ENCODE measurements at regions of chr19 and their contacts with region 1.

Region 1: DNA sequence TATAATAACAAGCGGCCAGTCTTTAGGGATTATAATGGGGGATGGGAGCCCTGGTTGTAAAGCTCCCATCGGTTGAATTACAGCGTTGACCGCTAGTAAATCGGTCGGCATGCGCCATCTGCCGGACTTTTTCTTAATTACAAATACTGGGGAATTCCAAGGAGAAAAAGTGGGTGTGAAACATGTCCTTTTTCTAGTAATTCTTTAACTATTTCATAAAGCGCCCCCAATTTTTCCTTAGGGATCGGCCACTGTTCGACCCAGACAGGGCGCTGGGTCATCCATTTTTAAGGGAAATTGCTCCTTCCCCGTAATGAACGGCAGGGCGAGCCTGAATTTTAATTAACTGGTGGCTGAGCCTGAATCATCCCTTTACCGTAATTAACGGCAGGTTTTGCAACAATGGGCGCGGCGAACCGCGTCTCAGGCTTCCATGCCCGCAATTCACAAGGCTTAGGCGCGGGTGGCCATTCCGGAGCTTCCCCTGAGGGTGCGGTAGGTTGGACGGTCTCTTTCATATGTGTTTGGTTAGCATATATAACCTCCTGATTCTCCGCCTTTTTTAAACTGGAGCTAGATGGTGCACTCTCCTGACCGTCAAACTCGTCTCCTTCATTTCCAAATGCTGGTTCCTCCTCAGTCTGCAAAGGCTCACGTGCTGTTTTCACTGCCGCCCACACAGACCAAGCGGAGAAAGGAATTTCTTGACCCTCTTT is 30.2 kb upstream of the EVI5L start:
- DNase-seq: no peak
- H3K4me3 ChIP-seq: peak overlapping the region; percentile 48
- CTCF ChIP-seq: peak; percentile 38

Region 2: GRCh38 chr19:7355151-7355820 is 444.5 kb before region 1 on chr19:
- CTCF ChIA-PET with region 1: interaction called, 37 read pairs
- POLR2A ChIA-PET with region 1: no interaction called
- DNase-seq: no peak
- H3K4me3 ChIP-seq: no peak overlapping the region
- CTCF ChIP-seq: no peak

Region 3: DNA sequence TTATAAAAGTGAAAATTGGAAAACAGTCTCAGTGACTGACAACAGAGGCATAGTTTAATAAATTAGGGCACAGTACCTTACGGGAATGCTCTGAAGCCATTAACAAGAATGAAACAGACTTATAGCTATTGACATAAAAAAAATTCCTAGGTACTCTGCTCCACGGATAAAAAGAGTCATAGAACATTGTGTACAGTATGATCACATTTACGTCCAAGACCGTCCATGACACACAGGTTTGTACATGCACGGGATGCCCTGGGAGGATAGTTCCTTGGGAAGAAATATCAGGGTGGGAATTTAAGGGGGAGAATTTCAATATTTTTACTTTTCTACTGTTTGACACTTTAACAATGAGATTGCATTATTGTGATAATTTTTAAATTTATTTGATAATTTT is 229.0 kb before region 1 on chr19:
- CTCF ChIA-PET with region 1: interaction called, 152 read pairs
- POLR2A ChIA-PET with region 1: no interaction called
- DNase-seq: no peak
- H3K4me3 ChIP-seq: no peak overlapping the region
- CTCF ChIP-seq: no peak

Region 4: DNA sequence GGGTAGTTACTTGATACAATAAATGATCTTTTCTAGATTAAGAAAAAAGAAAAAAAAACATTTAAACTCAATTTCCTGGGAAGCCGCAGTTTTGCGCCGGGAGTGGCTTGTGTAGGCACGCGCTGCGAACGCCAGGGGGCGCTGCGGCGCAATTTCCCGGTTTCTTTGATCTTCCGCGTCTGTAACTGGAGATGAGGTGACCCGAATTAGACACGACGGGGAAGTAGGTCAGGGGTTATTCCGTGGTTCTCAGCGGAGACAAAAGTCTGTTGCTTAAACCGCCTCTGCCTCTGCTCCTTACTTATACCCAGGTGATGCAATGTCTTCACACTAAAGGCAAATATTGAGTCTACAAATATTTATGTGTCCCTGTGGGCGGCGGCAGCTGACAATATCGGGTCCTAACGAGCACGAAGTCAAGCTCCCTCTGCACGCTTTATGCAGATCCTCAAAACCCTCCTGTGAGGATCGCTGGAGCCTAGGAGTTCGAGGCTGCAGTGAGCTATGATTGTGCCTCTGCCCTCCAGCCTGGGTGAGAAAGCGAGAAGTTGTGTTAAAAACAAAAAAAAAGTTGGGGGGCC is 147.6 kb before region 1 on chr19:
- CTCF ChIA-PET with region 1: interaction called, 65 read pairs
- POLR2A ChIA-PET with region 1: no interaction called
- DNase-seq: no peak
- H3K4me3 ChIP-seq: peak overlapping the region; percentile 26
- CTCF ChIP-seq: peak; percentile 90

Region 5: GRCh38 chr19:7680606-7681339 is 119.0 kb before region 1 on chr19 and contains the start of gene TRAPPC5:
- CTCF ChIA-PET with region 1: interaction called, 52 read pairs
- POLR2A ChIA-PET with region 1: no interaction called
- DNase-seq: no peak
- H3K4me3 ChIP-seq: peak within 1 kb of the TSS; percentile 95
- CTCF ChIP-seq: peak; percentile 67

Region 6: DNA sequence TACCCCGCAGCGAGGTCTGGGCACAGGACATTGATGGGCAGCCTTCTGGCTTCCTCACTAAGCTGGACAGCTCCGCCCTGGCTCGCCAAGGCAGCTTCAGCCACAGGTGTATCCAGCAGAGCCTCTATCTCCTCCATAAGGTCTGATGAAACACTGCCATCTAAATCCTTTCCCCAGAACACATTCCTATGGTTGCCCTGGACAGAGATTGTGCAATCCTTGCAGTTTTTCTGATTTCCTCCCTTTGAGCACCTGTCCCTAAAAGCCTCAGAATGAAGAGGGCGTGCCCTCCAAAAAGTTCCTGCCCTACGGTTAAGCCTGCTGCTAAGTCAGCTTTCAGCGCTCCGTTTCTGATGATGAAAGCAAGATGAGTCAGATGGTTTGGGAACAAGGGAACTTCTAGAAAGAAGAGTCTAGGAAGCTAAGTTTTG is 15.8 kb before region 1 on chr19:
- CTCF ChIA-PET with region 1: interaction called, 12 read pairs
- POLR2A ChIA-PET with region 1: no interaction called
- DNase-seq: no peak
- H3K4me3 ChIP-seq: no peak overlapping the region
- CTCF ChIP-seq: no peak